Left cardiac atrium (tissue), 4 donors: ENCODE measurements at regions of chr4 and their contacts with region 1.

Region 1: DNA sequence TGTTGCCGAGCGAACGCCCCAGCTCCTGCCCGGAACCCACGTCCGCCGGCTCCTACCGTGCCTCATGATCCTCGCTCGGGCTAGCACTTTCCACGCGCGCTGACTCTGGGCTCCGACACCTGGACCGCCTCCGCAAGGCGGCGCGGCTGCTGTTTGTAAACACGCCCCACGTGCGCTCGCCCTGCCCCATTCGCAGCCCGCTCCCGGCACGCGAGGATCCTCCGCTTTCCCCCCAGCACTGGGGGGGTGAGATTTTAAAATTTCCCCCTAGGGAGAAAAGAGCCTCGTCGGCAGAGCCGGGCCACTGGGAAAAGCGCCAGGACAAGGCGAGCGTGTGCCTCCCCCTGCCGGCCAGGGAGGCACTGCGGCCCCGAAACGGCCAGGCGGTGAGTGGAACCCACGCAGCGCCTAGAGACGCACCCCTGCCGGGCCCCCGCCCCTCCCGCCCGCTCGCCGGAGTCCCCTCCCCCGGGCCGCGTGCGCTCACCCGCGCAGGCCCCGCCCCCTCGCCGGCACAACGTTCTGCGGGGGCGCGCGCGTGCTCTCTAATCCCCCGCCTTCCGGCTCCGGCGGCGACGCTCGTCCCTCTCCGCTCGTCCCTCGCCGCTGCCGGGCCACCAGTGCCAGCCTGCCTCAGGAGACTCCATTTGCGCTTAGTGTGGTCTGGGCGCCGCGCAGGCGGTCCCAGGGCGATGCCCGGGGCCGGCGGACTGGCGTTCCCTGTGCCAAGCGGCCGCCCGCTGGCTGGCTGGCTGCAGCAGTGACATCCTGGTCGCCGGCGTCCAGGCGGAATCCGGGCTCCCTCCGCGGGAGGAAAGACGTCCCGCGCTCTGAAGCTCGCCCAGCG is at the start of gene TIGD2:
- DNase-seq: peak; percentile 90
- ATAC-seq: peak; percentile 98 to 99
- total RNA-seq, gene TIGD2: 2.2 to 2.7 TPM

Region 2: GRCh38 chr4:88823058-88823919 is 287.9 kb before region 1 on chr4:
- intact Hi-C with region 1: loop called in 1 of 2 experiments (anchors 5 kb)
- DNase-seq: peak; percentile 88
- ATAC-seq: peak; percentile 95 to 98

Region 3: DNA sequence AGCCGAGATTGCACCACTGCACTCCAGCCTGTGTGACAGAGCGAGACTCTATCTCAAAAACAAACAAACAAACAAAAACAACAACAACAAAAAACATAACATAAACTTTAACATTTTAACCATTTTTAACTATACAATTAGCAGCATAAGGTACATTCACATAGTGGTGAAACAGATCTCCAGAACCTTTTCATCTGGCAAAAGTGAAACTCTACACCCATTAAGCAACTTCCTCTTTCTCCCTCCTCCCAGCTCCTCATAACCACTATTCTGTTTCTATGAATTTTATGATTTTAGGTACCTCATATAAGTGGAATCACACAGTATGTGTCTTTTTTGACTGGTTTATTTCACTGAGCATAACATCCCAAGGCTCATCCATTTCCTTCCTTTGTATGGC is 157.8 kb before region 1 on chr4:
- intact Hi-C with region 1: no loop called
- DNase-seq: no peak
- ATAC-seq: no peak